ENCODE measurements at regions of chr13 and their contacts with region 1.

Region 1: DNA sequence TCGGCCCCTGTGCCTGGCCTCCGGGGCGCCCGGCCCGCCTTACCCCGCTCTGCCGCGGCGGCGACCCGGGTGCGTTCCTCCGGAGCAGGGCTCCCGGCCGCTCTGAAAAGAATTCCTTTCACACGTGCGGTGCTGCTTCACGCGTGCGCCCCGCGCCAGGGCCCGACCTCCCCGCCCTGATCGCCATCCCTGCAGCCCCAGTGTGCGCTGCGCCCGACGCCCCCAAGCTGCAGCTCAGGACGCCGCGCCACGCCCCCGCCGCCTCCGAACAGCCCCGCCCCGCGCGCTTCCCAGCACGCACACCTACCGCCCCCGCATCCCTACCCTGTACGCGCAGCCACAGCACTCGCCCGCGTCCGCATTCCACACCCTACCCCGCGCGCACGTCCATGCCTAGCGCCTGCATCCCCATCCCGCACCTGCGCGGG is at the start of gene GJA3:
- DNase-seq: peak; percentile 69 to 78 (median 72)
- ATAC-seq: peak; percentile 68 to 92 (median 82)
- H3K4me3 ChIP-seq: peak within 1 kb of the TSS; percentile 45 to 72 (median 62)
- H3K27ac ChIP-seq: peak within 1 kb of the TSS in 11 of 12 donors; percentile 56 to 90 (median 78)
- H3K4me1 ChIP-seq: peaks cover 0 to 23% (median 8%) of the 10 kb centered on the region in 12 donors
- H3K27me3 ChIP-seq: peaks cover 8 to 85% (median 32%) of the 10 kb centered on the region in 9 donors
- CTCF ChIP-seq: peak in 4 of 12 donors; percentile 18 to 45 (median 28)
- POLR2A ChIP-seq: no peak
- total RNA-seq, gene GJA3: 13.6 to 30.5 (median 17.9) TPM

Region 2: DNA sequence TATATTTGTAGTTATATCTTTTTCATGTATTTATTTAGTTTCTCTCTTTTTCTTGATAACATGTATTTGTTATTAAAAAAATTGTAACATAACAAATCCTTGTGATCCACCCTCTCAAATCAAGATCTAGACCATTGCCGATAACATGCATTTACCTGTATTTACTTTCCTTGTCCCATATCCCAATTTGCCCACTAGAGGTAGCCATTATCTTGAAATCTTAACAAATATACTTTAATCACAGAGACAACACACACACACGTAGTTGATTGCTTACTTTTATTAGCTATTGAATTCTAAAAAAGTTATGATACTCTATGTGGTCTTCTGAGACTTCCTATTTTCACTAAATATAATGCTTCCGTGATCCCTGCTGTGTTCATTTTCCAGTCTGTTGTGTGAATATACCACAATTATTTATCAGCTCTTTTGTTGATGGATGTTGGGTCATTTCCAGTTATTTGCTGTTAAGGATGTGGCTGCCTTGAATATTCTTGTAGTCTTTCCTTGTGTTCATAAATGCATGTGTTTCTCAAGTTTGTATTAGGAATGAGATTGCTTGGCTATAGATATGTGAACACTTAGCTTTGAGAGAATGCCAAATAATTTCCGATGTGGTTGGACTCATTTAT is 233.6 kb before region 1 on chr13:
- intact Hi-C with region 1: loop called in 1 of 10 experiments (anchors 5 kb)
- DNase-seq: no peak
- ATAC-seq: no peak
- H3K4me3 ChIP-seq: no peak overlapping the region
- H3K27ac ChIP-seq: no peak overlapping the region
- H3K4me1 ChIP-seq: no peaks in the 10 kb centered on the region
- H3K27me3 ChIP-seq: no peaks in the 10 kb centered on the region
- CTCF ChIP-seq: peak in 11 of 12 donors; percentile 13 to 47 (median 34)
- POLR2A ChIP-seq: no peak

Region 3: GRCh38 chr13:20035130-20035529 is 125.7 kb before region 1 on chr13:
- intact Hi-C with region 1: loop called in 3 of 10 experiments (anchors 1 to 5 kb)
- DNase-seq: no peak
- ATAC-seq: no peak
- H3K4me3 ChIP-seq: no peak overlapping the region
- H3K27ac ChIP-seq: no peak overlapping the region
- H3K4me1 ChIP-seq: peaks cover 0 to 11% (median 0%) of the 10 kb centered on the region in 12 donors
- H3K27me3 ChIP-seq: no peaks in the 10 kb centered on the region
- CTCF ChIP-seq: peak in 9 of 12 donors; percentile 10 to 50 (median 30)
- POLR2A ChIP-seq: no peak

Region 4: GRCh38 chr13:20057963-20058362 is 102.9 kb before region 1 on chr13:
- intact Hi-C with region 1: loop called in 5 of 10 experiments (anchors 5 to 10 kb)
- DNase-seq: no peak
- ATAC-seq: no peak
- H3K4me3 ChIP-seq: no peak overlapping the region
- H3K27ac ChIP-seq: no peak overlapping the region
- H3K4me1 ChIP-seq: peaks cover 0 to 21% (median 0%) of the 10 kb centered on the region in 12 donors
- H3K27me3 ChIP-seq: no peaks in the 10 kb centered on the region
- CTCF ChIP-seq: peak in 2 of 12 donors; percentile 10 to 27
- POLR2A ChIP-seq: no peak

Region 5: GRCh38 chr13:20127577-20128466 is 33.0 kb before region 1 on chr13:
- intact Hi-C with region 1: loop called in 9 of 10 experiments (anchors 1 to 5 kb)
- DNase-seq: peak; percentile 77 to 88 (median 82)
- ATAC-seq: peak; percentile 43 to 85 (median 83)
- H3K4me3 ChIP-seq: peak overlapping the region; percentile 41 to 76 (median 64)
- H3K27ac ChIP-seq: peak overlapping the region; percentile 54 to 98 (median 94)
- H3K4me1 ChIP-seq: peaks cover 0 to 49% (median 24%) of the 10 kb centered on the region in 12 donors
- H3K27me3 ChIP-seq: peaks cover 0 to 21% (median 8%) of the 10 kb centered on the region in 9 donors
- CTCF ChIP-seq: peak; percentile 26 to 66 (median 46)
- POLR2A ChIP-seq: peak in 1 of 2 donors; percentile 25

Measured in heart left ventricle (tissue), 16 donors.